Activated T-helper 2 cell treated with anti-CD3 and anti-CD28 coated beads, Interferon-gamma antibody, Interleukin-2, Interleukin-4, amounts not matched to agents 10 μg/mL and 5 μg/mL and 100 μg/mL, durations not matched to agents 14 hours and 24 hours and 36 hours (primary cell): ENCODE measurements at regions of chr2 and their contacts with region 1.

Region 1: DNA sequence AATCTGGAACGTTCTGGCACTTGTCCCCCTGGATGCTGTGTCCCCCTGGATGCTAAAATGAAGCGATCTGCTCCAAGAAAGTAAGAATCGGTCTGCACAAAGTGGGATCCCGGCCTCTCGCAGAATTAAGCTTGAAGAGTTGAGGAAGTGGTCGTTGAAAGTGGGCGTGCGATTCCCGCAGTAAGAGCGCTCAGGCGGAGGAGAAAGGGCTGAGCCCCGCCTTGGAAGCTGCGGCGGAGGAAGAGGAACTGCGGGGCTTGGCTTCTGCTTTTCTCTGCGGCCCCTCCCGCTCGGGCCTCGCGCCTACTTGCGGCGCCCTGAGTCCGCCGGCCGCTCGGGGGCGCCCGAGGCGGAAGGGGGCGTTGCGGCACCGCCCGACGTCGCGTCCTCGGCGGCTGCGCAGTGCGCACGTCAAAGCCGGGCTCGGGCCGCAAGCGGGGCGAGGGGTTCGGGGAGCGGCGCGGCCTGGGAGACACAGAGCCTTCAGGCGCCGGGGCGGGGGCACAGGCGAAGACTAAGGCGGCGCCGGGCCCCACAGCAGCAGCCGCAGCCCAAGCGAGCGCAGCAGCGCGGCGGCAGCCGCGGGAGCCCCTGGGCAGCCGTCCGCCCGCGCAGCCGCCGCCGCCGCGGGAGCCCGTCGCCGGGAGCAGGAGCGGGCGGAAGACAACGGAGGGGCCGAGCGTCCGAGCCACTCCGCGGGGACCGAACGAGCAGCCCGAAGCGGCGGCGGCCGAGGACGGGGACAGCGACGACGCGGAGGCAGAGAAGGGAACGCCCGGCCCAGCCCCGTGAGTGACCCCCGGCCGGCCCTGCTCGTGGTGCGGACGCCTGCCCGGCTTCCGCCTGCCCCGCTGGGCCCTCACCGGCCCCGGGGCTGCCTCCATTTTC is at the start of gene CAB39:
- DNase-seq: peak; percentile 87
- H3K4me3 Mint-ChIP-seq: peak within 1 kb of the TSS; percentile 99
- H3K27ac Mint-ChIP-seq: peak within 1 kb of the TSS; percentile 93
- H3K4me1 Mint-ChIP-seq: peaks cover 34% of the 10 kb centered on the region
- H3K27me3 Mint-ChIP-seq: no peaks in the 10 kb centered on the region
- total RNA-seq, gene CAB39: 173 and 176 TPM in 2 replicates

Region 2: DNA sequence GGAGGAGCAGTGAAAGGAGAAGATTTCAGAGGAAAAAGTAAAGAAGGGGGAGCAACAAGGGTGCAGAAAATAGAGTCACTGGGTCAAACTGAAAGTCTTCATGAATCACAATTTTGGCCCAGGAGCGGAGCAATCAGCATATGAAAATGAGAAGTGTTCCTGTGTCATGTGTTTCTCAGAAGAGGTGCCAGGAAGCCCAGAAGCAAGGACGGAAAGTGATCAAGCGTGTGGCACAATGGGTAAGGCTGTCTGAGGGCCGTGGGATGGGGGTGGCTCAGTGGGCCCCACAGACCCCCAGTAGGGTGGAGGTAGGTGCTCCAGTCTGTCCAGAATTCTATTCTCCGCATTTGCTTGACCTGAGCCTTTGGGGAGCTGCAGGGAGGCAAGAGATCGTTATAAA is 443.0 kb before region 1 on chr2:
- intact Hi-C with region 1: no loop called
- DNase-seq: no peak
- H3K4me3 Mint-ChIP-seq: peak overlapping the region; percentile 24
- H3K27ac Mint-ChIP-seq: peak overlapping the region; percentile 90
- H3K4me1 Mint-ChIP-seq: peaks cover 67% of the 10 kb centered on the region
- H3K27me3 Mint-ChIP-seq: no peaks in the 10 kb centered on the region

Region 3: GRCh38 chr2:230643576-230644291 is 69.0 kb before region 1 on chr2:
- intact Hi-C with region 1: loop called (anchors 1 kb)
- DNase-seq: peak; percentile 51
- H3K4me3 Mint-ChIP-seq: peak overlapping the region; percentile 40
- H3K27ac Mint-ChIP-seq: peak overlapping the region; percentile 98
- H3K4me1 Mint-ChIP-seq: peaks cover 24% of the 10 kb centered on the region
- H3K27me3 Mint-ChIP-seq: no peaks in the 10 kb centered on the region

Region 4: DNA sequence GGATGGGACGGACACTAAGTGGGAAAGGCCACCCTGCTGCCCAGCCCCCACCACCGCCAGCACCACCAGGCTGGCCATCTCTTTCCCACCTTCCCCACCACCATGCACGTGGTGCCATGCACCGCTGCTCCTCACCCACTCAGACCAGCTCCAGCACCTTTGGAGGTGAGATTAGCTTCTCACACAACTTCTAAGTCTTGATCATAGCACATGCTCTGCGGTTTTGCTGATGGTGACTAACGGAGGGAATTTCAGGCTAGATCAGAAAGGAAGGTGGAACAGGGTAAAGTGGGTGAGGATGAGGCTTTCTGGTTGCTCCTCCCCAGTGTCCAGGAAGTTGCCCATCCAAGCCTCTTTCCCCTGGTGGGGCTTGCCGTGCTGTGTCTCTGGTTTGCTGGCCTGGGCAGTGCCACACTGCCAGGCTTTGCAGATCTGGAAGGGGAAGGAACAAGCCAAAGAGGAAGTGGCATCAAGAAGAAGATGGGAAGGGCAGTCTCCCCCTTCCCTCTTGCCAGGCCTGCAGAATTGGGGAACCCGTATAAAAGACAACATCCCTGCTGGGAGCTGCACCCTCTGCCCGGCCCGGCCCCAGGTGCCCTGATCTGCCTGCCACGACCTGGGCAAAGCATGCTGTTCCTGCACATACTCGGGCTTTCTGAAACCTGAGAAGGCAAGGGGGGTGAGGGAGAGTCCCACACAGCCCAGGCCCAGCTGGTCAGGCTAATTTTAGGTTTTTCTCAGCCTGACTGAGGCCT is 44.3 kb before region 1 on chr2:
- intact Hi-C with region 1: loop called (anchors 1 kb)
- DNase-seq: no peak
- H3K4me3 Mint-ChIP-seq: peak overlapping the region; percentile 40
- H3K27ac Mint-ChIP-seq: peak overlapping the region; percentile 93
- H3K4me1 Mint-ChIP-seq: peaks cover 73% of the 10 kb centered on the region
- H3K27me3 Mint-ChIP-seq: no peaks in the 10 kb centered on the region

Region 5: GRCh38 chr2:230700447-230700846 is 12.2 kb before region 1 on chr2:
- intact Hi-C with region 1: no loop called
- DNase-seq: no peak
- H3K4me3 Mint-ChIP-seq: no peak overlapping the region
- H3K27ac Mint-ChIP-seq: no peak overlapping the region
- H3K4me1 Mint-ChIP-seq: peaks cover 13% of the 10 kb centered on the region
- H3K27me3 Mint-ChIP-seq: no peaks in the 10 kb centered on the region

Region 6: GRCh38 chr2:230751062-230751461 is 38.4 kb after region 1 on chr2:
- intact Hi-C with region 1: loop called (anchors 2 kb)
- DNase-seq: no peak
- H3K4me3 Mint-ChIP-seq: no peak overlapping the region
- H3K27ac Mint-ChIP-seq: peak overlapping the region; percentile 77
- H3K4me1 Mint-ChIP-seq: peaks cover 70% of the 10 kb centered on the region
- H3K27me3 Mint-ChIP-seq: no peaks in the 10 kb centered on the region